Testis (tissue), 5 donors: ENCODE measurements at regions of chr4 and their contacts with region 1.

Region 1: GRCh38 chr4:16026160-16026761 is 57.6 kb downstream of the PROM1 start:
- DNase-seq: peak; percentile 41
- H3K4me3 ChIP-seq: no peak overlapping the region
- H3K27ac ChIP-seq: no peak overlapping the region
- H3K4me1 ChIP-seq: no peaks in the 10 kb centered on the region
- H3K27me3 ChIP-seq: no peaks in the 10 kb centered on the region
- CTCF ChIP-seq: peak; percentile 73 to 86 (median 74)
- POLR2A ChIP-seq: no peak

Region 2: DNA sequence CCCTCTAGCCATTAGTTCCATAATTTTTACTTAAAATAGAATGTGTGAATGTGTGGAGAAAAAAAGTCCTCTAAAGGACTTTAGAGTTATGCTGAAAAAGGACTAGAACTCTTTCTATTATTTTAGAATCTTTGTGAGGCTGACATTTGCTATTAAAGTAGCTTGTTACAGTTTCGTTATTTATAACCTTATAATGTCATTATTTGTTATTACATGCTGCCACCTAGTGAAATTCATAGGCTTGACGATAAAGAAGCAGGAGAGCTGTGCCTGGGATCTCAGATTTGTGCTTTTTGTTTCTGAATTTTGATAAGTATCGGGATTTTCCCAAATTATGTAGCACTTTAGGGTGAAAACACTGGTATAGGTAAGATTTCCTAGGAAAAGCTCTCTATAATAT is 238.5 kb after region 1 on chr4:
- intact Hi-C with region 1: loop called (anchors 10 kb)
- DNase-seq: no peak
- H3K4me3 ChIP-seq: no peak overlapping the region
- H3K27ac ChIP-seq: no peak overlapping the region
- H3K4me1 ChIP-seq: no peaks in the 10 kb centered on the region
- H3K27me3 ChIP-seq: no peaks in the 10 kb centered on the region
- CTCF ChIP-seq: peak; percentile 30 to 35 (median 30)
- POLR2A ChIP-seq: no peak